ENCODE measurements at regions of chr2 and their contacts with region 1.

Region 1: GRCh38 chr2:96715658-96716057 is 24.2 kb downstream of the LMAN2L start:
- DNase-seq: no peak

Region 2: DNA sequence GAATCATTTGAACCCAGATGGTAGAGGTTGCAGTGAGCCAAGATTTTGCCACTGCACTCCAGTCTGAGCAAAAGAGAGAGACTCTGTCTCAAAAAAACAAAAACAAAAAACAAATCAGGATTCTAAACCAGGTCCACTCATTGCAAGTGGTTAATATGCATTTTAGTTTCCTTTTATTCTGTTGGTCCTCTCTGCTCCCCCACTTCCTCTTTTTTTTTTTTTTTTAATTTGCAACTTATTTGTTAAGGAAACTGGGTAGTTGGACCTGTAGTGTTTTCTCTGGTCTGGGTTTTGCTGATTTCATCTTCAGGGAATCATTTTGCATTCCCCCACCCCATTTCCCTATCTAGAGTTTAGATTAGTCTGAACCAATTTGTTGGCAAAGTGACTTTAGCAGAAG is 59.1 kb before region 1 on chr2:
- intact Hi-C with region 1: no loop called
- DNase-seq: no peak

Region 3: GRCh38 chr2:96811917-96812316 is 96.3 kb after region 1 on chr2:
- intact Hi-C with region 1: loop called in 1 of 2 experiments (anchors 5 kb)
- DNase-seq: no peak

Measured in posterior vena cava (tissue), 2 donors.